Activated B cell treated with CpG ODN at 0.5 μM for 24 hours (primary cell): ENCODE measurements at regions of chr13 and their contacts with region 1.

Region 1: GRCh38 chr13:20828539-20829364 is 55.0 kb upstream of the EEF1AKMT1 start:
- DNase-seq: no peak
- ATAC-seq: peak; percentile 76
- H3K4me3 Mint-ChIP-seq: no peak overlapping the region
- H3K27ac Mint-ChIP-seq: peak overlapping the region; percentile 31
- H3K4me1 Mint-ChIP-seq: peaks cover 6% of the 10 kb centered on the region
- H3K27me3 Mint-ChIP-seq: no peaks in the 10 kb centered on the region
- CTCF ChIP-seq: peak; percentile 64

Region 2: DNA sequence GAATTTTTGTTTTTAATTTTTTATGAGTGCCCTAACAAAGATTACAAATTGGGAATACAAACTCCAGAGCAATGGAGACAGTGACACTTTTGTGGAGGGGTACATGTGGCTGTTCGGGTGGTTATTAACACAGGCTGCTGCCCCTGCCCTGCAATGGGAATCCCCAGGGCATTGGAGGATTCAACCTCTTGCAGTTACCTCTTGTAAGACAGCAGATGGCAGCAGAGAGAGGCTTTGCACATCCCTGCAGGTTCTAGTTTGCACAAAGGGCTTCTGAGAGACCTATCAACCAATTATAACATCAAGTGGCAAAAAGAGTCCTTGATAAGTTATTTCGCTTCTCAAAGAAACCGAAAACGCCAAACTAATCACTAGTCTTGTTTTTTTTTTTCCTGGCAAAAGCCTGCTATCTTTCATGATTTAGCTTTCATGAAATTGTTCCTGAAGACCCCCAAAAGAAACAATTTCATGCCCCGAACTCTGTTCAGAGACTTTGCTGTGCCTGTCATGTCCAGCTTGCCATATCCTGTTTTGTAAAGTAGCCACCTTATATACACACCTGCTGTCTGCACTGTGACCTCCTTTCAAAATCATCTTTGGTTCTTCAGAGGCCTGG is 646.4 kb before region 1 on chr13:
- CTCF ChIA-PET with region 1: no interaction called
- POLR2A ChIA-PET with region 1: no interaction called
- intact Hi-C with region 1: loop called (anchors 5 kb)
- DNase-seq: no peak
- ATAC-seq: peak; percentile 100
- H3K4me3 Mint-ChIP-seq: no peak overlapping the region
- H3K27ac Mint-ChIP-seq: no peak overlapping the region
- H3K4me1 Mint-ChIP-seq: peaks cover 2% of the 10 kb centered on the region
- H3K27me3 Mint-ChIP-seq: peaks cover 44% of the 10 kb centered on the region
- CTCF ChIP-seq: peak; percentile 42

Region 3: GRCh38 chr13:20197361-20197834 is 631.4 kb before region 1 on chr13:
- CTCF ChIA-PET with region 1: interaction called, 5 read pairs
- POLR2A ChIA-PET with region 1: no interaction called
- intact Hi-C with region 1: loop called (anchors 2 kb)
- DNase-seq: no peak
- ATAC-seq: peak; percentile 71
- H3K4me3 Mint-ChIP-seq: no peak overlapping the region
- H3K27ac Mint-ChIP-seq: no peak overlapping the region
- H3K4me1 Mint-ChIP-seq: peaks cover 16% of the 10 kb centered on the region
- H3K27me3 Mint-ChIP-seq: peaks cover 40% of the 10 kb centered on the region
- CTCF ChIP-seq: peak; percentile 6

Region 4: GRCh38 chr13:20713751-20714150 is 115.0 kb before region 1 on chr13:
- CTCF ChIA-PET with region 1: interaction called, 7 read pairs
- POLR2A ChIA-PET with region 1: no interaction called
- intact Hi-C with region 1: loop called (anchors 1 kb)
- DNase-seq: no peak
- ATAC-seq: no peak
- H3K4me3 Mint-ChIP-seq: no peak overlapping the region
- H3K27ac Mint-ChIP-seq: no peak overlapping the region
- H3K4me1 Mint-ChIP-seq: peaks cover 7% of the 10 kb centered on the region
- H3K27me3 Mint-ChIP-seq: peaks cover 7% of the 10 kb centered on the region
- CTCF ChIP-seq: no peak

Region 5: DNA sequence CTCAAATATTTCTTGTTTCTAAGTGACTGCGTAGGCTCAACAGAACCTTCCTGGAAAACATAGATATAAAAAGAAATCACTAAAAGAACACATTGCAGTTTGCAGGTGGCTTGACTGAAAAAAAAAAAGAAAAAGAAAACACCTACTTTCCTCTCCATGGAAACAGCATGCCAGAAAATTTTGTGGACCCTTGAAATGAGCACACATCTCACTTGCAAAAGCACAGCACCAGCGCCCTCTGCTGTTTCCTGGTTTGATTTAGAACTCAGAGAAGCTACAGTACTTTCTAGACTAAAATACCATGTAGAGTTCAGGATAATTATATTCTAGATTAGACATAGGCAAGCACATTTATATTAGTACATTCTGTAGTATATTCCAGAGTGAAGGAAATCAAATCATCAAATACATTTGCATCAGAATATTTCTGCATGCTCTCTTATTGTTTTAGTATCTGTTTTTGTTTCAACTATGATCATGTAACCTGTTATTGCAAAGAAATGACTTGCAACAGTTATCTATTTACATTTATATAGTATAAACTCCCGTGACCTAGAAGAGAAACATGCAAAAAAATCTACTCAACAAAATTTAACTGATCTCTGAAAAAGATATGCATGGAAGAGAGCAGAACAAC is 96.1 kb after region 1 on chr13:
- CTCF ChIA-PET with region 1: interaction called, 6 read pairs
- POLR2A ChIA-PET with region 1: no interaction called
- intact Hi-C with region 1: loop called (anchors 10 kb)
- DNase-seq: peak; percentile 24
- ATAC-seq: no peak
- H3K4me3 Mint-ChIP-seq: no peak overlapping the region
- H3K27ac Mint-ChIP-seq: no peak overlapping the region
- H3K4me1 Mint-ChIP-seq: no peaks in the 10 kb centered on the region
- H3K27me3 Mint-ChIP-seq: no peaks in the 10 kb centered on the region
- CTCF ChIP-seq: no peak